Caco-2 (cell line): ENCODE measurements at regions of chr5 and their contacts with region 1.

Region 1: DNA sequence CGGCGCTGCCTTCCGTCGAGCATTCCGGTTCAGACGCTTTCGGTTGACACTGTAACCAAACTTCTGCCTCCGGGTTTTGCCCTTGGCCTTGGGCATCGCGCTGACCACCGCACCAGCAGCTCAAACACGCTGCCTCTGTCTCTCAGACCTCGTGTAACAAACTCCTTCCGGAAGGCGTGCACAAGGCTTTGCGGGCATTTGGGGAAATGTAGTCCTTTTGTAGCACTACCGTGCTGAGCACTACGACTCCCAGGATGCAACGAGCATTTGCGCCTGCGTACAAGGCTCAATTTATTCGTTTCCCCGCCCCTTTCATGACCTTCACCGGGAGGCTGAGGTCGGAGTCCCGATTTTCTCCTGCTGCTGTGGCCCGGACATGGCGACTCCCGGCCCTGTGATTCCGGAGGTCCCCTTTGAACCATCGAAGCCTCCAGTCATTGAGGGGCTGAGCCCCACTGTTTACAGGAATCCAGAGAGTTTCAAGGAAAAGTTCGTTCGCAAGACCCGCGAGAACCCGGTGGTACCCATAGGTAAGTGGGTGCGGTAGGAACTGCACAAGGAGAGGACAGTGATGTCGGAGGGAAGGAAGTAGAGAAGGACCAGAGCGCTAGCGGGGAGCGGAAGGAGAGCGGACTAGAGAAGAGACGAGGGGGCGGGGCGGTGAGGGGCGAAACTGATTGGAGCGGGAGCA is at the starts of genes HIGD2A and NOP16:
- DNase-seq: peak; percentile 98 to 99
- H3K4me3 ChIP-seq: peak within 1 kb of the TSS; percentile 88
- H3K4me3 Mint-ChIP-seq: peak within 1 kb of the TSS; percentile 87
- H3K27ac Mint-ChIP-seq: peak within 1 kb of the TSS; percentile 98
- H3K4me1 ChIP-seq: peaks cover 4% of the 10 kb centered on the region; the same call in 1 of the 2 replicates
- H3K4me1 Mint-ChIP-seq: no peaks in the 10 kb centered on the region
- H3K27me3 ChIP-seq: no peaks in the 10 kb centered on the region
- H3K27me3 Mint-ChIP-seq: no peaks in the 10 kb centered on the region
- CTCF ChIP-seq: no peak
- total RNA-seq, gene HIGD2A: 110 and 118 TPM in 2 replicates
- total RNA-seq, gene NOP16: 48.0 and 56.4 TPM in 2 replicates

Region 2: GRCh38 chr5:176337913-176338312 is 50.7 kb before region 1 on chr5:
- CTCF ChIA-PET with region 1: no interaction called
- POLR2A ChIA-PET with region 1: no interaction called
- intact Hi-C with region 1: no loop called
- DNase-seq: no peak
- H3K4me3 ChIP-seq: no peak overlapping the region
- H3K4me3 Mint-ChIP-seq: no peak overlapping the region
- H3K27ac Mint-ChIP-seq: no peak overlapping the region
- H3K4me1 ChIP-seq: no peaks in the 10 kb centered on the region
- H3K4me1 Mint-ChIP-seq: no peaks in the 10 kb centered on the region
- H3K27me3 ChIP-seq: no peaks in the 10 kb centered on the region
- H3K27me3 Mint-ChIP-seq: no peaks in the 10 kb centered on the region
- CTCF ChIP-seq: no peak

Region 3: GRCh38 chr5:176361437-176362232 is 27.0 kb before region 1 on chr5 and contains the start of gene KIAA1191:
- CTCF ChIA-PET with region 1: no interaction called
- POLR2A ChIA-PET with region 1: interaction called, 6 read pairs
- intact Hi-C with region 1: loop called (anchors 1 kb)
- DNase-seq: peak; percentile 94 to 96
- H3K4me3 ChIP-seq: peak within 1 kb of the TSS; percentile 82
- H3K4me3 Mint-ChIP-seq: peak within 1 kb of the TSS; percentile 95
- H3K27ac Mint-ChIP-seq: peak within 1 kb of the TSS; percentile 93
- H3K4me1 ChIP-seq: no peaks in the 10 kb centered on the region; the same call in 1 of the 2 replicates
- H3K4me1 Mint-ChIP-seq: no peaks in the 10 kb centered on the region
- H3K27me3 ChIP-seq: no peaks in the 10 kb centered on the region
- H3K27me3 Mint-ChIP-seq: peaks cover 2% of the 10 kb centered on the region
- CTCF ChIP-seq: peak in 1 of 2 experiments; percentile 46
- total RNA-seq, gene KIAA1191: 119 and 123 TPM in 2 replicates

Region 4: GRCh38 chr5:176400382-176401156 is 12.0 kb after region 1 on chr5:
- CTCF ChIA-PET with region 1: no interaction called
- POLR2A ChIA-PET with region 1: interaction called, 14 read pairs
- intact Hi-C with region 1: no loop called
- DNase-seq: no peak
- H3K4me3 ChIP-seq: no peak overlapping the region
- H3K4me3 Mint-ChIP-seq: no peak overlapping the region
- H3K27ac Mint-ChIP-seq: peak overlapping the region; percentile 19
- H3K4me1 ChIP-seq: no peaks in the 10 kb centered on the region
- H3K4me1 Mint-ChIP-seq: peaks cover 10% of the 10 kb centered on the region
- H3K27me3 ChIP-seq: no peaks in the 10 kb centered on the region
- H3K27me3 Mint-ChIP-seq: no peaks in the 10 kb centered on the region
- CTCF ChIP-seq: no peak

Region 5: GRCh38 chr5:176537608-176538504 is 149.3 kb after region 1 on chr5:
- CTCF ChIA-PET with region 1: no interaction called
- POLR2A ChIA-PET with region 1: interaction called, 3 read pairs
- intact Hi-C with region 1: loop called (anchors 1 kb)
- DNase-seq: peak; percentile 97 to 100
- H3K4me3 ChIP-seq: peak overlapping the region; percentile 90
- H3K4me3 Mint-ChIP-seq: peak overlapping the region; percentile 96
- H3K27ac Mint-ChIP-seq: peak overlapping the region; percentile 96
- H3K4me1 ChIP-seq: peaks cover 14% of the 10 kb centered on the region
- H3K4me1 Mint-ChIP-seq: peaks cover 29% of the 10 kb centered on the region
- H3K27me3 ChIP-seq: no peaks in the 10 kb centered on the region
- H3K27me3 Mint-ChIP-seq: no peaks in the 10 kb centered on the region
- CTCF ChIP-seq: no peak